ENCODE measurements at regions of chr10 and their contacts with region 1.

Region 1: DNA sequence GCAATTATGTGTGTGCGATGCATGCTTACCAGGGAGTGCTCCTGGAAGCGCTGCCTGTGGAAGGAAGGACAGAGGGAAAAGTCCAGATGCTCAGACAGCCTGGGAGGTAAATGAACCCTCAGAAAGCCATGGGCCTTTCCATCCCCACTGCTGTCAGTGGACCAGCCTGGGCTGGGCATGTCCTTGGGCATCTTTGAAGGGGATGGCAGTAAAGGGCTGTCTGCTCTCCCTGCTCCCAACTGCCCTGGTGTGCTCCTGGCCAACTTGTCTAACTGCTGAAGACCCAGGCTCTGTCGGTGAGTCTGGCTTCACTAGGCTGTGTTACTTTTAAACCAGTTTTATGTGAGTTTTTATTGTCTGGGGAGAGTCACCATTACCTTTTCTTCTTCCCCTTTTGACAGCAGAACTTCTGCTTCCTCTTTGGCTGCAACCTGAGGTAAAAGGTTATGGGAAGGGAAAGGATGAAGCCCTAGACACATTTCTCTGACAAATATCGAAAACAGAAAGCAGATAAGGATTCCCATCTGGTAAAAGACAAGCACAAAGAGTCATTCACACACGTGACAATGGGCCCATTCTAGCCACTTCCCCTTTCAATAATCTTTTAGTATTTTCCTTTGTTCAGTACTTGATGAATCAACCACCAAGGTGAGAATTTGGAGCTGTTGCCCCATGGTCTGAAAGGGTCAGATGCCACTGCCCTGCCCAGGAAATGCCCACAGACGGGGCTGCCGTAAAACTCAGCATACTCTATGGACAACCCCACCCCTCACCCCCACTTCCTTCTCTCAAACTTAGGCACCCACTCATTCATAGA is 27.6 kb upstream of the PIK3AP1 start:
- H3K4me3 Mint-ChIP-seq: no peak overlapping the region
- H3K27ac Mint-ChIP-seq: peak overlapping the region; percentile 68
- H3K4me1 Mint-ChIP-seq: peaks cover 22% of the 10 kb centered on the region
- H3K27me3 Mint-ChIP-seq: no peaks in the 10 kb centered on the region

Region 2: DNA sequence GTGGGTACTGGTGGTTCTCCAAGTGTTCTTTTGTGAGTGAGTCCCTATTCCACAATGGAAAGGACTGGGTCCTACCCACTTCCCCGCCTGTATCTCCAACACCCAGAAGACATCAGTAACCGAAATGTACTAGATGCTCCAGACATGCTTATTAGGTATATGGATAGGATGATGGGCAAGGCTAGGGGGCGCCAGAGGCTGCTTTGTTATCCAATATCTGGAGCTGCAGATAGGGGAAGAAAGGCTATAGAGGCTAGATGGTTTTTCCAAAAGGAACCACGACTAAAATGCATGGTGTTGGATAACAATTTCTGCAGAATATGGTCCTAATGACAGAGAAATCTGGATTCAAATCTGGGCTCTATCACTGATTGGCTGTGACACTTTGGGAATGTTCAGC is 105.0 kb before region 1 on chr10:
- intact Hi-C with region 1: loop called (anchors 5 kb)
- H3K4me3 Mint-ChIP-seq: no peak overlapping the region
- H3K27ac Mint-ChIP-seq: no peak overlapping the region
- H3K4me1 Mint-ChIP-seq: peaks cover 28% of the 10 kb centered on the region
- H3K27me3 Mint-ChIP-seq: no peaks in the 10 kb centered on the region

Region 3: GRCh38 chr10:96803318-96803664 is 55.3 kb after region 1 on chr10:
- intact Hi-C with region 1: no loop called
- H3K4me3 Mint-ChIP-seq: no peak overlapping the region
- H3K27ac Mint-ChIP-seq: no peak overlapping the region
- H3K4me1 Mint-ChIP-seq: no peaks in the 10 kb centered on the region
- H3K27me3 Mint-ChIP-seq: peaks cover 4% of the 10 kb centered on the region